AG04450 (cell line): ENCODE measurements at regions of chrX and their contacts with region 1.

Region 1: DNA sequence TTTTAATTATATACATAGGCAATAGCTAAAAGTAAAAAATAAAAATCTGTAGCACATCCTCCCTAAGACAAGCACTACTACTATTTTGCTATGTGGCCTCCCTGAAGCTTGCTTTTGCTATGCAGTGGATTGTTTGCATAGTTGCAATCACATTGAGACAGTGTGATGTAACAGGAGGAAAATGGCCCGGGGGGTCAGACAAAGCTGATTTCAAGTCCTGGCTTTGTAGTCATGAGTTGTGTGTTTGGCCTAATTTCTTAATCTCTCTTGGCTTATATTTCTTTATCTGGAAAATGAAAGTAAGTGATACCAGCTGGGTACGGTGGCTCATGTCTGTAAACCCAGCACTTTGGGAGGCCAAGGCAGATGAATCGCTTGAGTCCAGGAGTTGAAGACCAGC is 166.6 kb downstream of the LHFPL1 start:
- DNase-seq: peak; percentile 3
- H3K4me3 ChIP-seq: no peak overlapping the region
- H3K27ac ChIP-seq: no peak overlapping the region
- H3K27me3 ChIP-seq: no peaks in the 10 kb centered on the region
- CTCF ChIP-seq: no peak

Region 2: DNA sequence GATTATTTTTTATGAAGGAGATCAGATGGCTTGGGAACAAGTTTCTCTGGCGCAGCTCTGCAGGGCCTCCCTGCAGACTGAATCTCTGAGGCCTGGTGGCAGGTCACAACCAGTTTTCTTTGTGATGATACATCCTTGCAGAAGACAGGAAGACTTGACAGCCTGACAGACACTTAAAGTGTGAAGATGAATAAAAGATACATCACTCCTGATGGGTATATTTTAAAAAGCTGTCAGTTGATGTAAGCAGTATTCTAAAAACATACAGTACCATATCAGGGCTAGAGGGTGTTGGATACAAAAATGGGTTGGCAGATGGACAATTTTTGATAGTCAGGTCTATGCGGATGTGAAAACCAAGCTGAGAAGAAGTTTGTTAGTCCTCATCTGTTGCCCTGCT is 72.9 kb before region 1 on chrX:
- CTCF ChIA-PET with region 1: no interaction called
- POLR2A ChIA-PET with region 1: no interaction called
- DNase-seq: no peak
- H3K4me3 ChIP-seq: no peak overlapping the region
- H3K27ac ChIP-seq: no peak overlapping the region
- H3K27me3 ChIP-seq: no peaks in the 10 kb centered on the region
- CTCF ChIP-seq: no peak

Region 3: GRCh38 chrX:112642349-112642748 is 129.2 kb after region 1 on chrX:
- CTCF ChIA-PET with region 1: interaction called, 11 read pairs
- POLR2A ChIA-PET with region 1: no interaction called
- DNase-seq: peak; percentile 23
- H3K4me3 ChIP-seq: no peak overlapping the region
- H3K27ac ChIP-seq: no peak overlapping the region
- H3K27me3 ChIP-seq: no peaks in the 10 kb centered on the region
- CTCF ChIP-seq: peak; percentile 66